ENCODE measurements at regions of chr1 and their contacts with region 1.

Region 1: DNA sequence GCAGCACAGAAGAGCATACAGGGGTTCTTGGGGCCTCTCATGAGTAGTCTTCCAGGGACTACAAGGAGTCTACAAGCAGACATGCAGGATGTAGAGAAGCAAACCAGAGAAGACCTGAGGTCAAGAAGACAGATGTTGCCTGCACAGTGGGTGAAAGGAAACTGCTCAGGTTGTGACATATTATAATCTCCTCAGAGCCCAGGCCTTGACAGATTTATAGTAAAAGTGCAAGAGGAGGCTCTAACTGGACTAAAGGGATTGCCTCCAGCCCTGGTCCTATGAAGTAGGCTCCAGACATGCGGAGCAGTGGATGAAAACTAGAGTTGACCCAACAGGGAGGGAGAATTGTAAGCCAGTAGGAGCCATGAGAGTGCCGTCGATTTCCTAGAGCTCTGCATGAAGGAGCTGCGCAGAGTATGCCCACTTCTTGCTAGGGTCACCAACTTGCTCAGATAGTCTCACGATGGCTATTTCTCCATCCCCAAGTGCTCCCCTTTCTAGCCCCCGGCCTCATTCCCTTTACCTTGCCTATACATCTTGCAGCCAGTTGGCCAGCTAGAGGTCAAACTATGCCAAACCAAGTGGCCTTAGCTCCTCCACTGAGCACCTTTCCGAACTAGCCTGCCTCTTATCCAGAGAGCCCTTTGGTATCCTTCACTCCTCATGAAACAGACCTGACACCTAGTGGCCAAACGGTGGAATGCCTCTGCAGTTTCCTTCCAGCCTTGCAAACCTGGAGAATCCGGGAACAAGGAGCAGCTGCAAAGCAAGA is 36.2 kb upstream of the IPO9 start:
- DNase-seq: peak; percentile 7 to 69 (median 31)
- ATAC-seq: peak; percentile 51
- H3K4me3 ChIP-seq: no peak overlapping the region
- H3K4me3 Mint-ChIP-seq: no peak overlapping the region
- H3K27ac ChIP-seq: no peak overlapping the region
- H3K27ac Mint-ChIP-seq: no peak overlapping the region
- H3K4me1 ChIP-seq: peaks cover 6% of the 10 kb centered on the region
- H3K4me1 Mint-ChIP-seq: peaks cover 5% of the 10 kb centered on the region
- H3K27me3 ChIP-seq: no peaks in the 10 kb centered on the region
- H3K27me3 Mint-ChIP-seq: no peaks in the 10 kb centered on the region
- CTCF ChIP-seq: peak; percentile 87

Region 2: GRCh38 chr1:201559679-201560162 is 233.0 kb before region 1 on chr1:
- CTCF ChIA-PET with region 1: interaction called, 6 read pairs
- POLR2A ChIA-PET with region 1: no interaction called
- intact Hi-C with region 1: loop called (anchors 1 kb)
- DNase-seq: peak; percentile 47 to 82 (median 60)
- ATAC-seq: peak; percentile 98
- H3K4me3 ChIP-seq: no peak overlapping the region
- H3K4me3 Mint-ChIP-seq: no peak overlapping the region
- H3K27ac ChIP-seq: no peak overlapping the region
- H3K27ac Mint-ChIP-seq: no peak overlapping the region
- H3K4me1 ChIP-seq: peaks cover 4% of the 10 kb centered on the region
- H3K4me1 Mint-ChIP-seq: peaks cover 6% of the 10 kb centered on the region
- H3K27me3 ChIP-seq: no peaks in the 10 kb centered on the region
- H3K27me3 Mint-ChIP-seq: no peaks in the 10 kb centered on the region
- CTCF ChIP-seq: peak; percentile 94

Region 3: GRCh38 chr1:201709564-201710295 is 83.0 kb before region 1 on chr1:
- CTCF ChIA-PET with region 1: interaction called, 4 read pairs
- POLR2A ChIA-PET with region 1: no interaction called
- intact Hi-C with region 1: loop called (anchors 1 kb)
- DNase-seq: peak; percentile 27 to 67 (median 45)
- ATAC-seq: peak; percentile 78
- H3K4me3 ChIP-seq: no peak overlapping the region
- H3K4me3 Mint-ChIP-seq: no peak overlapping the region
- H3K27ac ChIP-seq: no peak overlapping the region
- H3K27ac Mint-ChIP-seq: no peak overlapping the region
- H3K4me1 ChIP-seq: peaks cover 3% of the 10 kb centered on the region
- H3K4me1 Mint-ChIP-seq: no peaks in the 10 kb centered on the region
- H3K27me3 ChIP-seq: no peaks in the 10 kb centered on the region
- H3K27me3 Mint-ChIP-seq: no peaks in the 10 kb centered on the region
- CTCF ChIP-seq: peak; percentile 80